GM13977 (cell line): ENCODE measurements at regions of chr1 and their contacts with region 1.

Region 1: GRCh38 chr1:62746085-62746808 is 37.7 kb upstream of the ATG4C start:
- DNase-seq: peak; percentile 63
- CTCF ChIP-seq: peak; percentile 62

Region 2: DNA sequence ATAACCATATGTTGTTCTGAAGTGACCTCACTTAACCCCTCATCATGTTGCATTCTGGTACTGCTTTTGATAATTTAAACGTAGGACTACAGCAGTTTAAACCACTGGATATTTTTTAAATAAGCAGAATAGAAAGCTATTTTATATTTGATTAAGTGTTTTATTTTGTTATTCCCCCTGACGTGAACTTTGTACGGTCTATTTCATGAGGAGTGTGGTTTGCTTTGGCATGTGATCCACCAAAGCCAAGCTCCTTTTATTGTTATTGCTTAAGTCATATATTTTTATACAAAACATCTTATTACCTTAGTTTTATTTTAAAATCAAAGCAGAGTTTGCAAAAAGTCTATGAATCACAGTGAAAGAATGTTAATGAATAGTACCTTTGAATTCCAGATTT is 653.0 kb before region 1 on chr1:
- in situ Hi-C with region 1: no loop called
- DNase-seq: no peak
- CTCF ChIP-seq: no peak

Region 3: GRCh38 chr1:62159940-62160348 is 586.3 kb before region 1 on chr1:
- in situ Hi-C with region 1: loop called (anchors 25 kb)
- DNase-seq: no peak
- CTCF ChIP-seq: no peak

Region 4: DNA sequence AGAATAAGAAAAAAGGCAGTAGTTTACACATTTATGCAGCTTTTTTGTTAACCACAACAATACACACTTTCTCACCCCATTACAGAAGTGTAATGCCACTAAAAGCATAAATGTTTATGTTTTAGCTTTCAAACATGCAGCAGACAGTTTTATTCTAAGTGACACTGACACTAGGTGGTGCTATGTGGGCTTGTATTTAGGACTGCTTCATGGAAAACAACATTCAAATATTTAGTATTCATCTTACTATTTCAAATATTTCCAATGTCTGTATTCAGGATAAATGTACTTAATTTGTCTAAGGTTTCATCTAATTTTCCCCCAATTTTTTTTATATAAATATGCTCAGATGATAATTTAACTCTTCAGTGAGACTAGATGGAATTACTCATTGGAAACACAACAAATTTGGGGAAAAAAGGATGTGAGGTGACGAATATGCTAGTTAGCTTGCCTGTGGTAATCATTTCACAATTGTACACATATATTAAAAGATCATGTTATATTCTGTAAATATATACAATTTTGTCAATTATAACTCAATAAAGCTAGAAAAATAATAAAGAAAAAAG is 238.0 kb before region 1 on chr1:
- in situ Hi-C with region 1: loop called (anchors 5 kb)
- DNase-seq: peak; percentile 40
- CTCF ChIP-seq: peak; percentile 71

Region 5: GRCh38 chr1:62783723-62784508 is 37.7 kb after region 1 on chr1 and contains the start of gene ATG4C:
- in situ Hi-C with region 1: no loop called
- DNase-seq: peak; percentile 89
- CTCF ChIP-seq: no peak